Naive thymus-derived CD8-positive, alpha-beta T cell (primary cell): ENCODE measurements at regions of chr11 and their contacts with region 1.

Region 1: DNA sequence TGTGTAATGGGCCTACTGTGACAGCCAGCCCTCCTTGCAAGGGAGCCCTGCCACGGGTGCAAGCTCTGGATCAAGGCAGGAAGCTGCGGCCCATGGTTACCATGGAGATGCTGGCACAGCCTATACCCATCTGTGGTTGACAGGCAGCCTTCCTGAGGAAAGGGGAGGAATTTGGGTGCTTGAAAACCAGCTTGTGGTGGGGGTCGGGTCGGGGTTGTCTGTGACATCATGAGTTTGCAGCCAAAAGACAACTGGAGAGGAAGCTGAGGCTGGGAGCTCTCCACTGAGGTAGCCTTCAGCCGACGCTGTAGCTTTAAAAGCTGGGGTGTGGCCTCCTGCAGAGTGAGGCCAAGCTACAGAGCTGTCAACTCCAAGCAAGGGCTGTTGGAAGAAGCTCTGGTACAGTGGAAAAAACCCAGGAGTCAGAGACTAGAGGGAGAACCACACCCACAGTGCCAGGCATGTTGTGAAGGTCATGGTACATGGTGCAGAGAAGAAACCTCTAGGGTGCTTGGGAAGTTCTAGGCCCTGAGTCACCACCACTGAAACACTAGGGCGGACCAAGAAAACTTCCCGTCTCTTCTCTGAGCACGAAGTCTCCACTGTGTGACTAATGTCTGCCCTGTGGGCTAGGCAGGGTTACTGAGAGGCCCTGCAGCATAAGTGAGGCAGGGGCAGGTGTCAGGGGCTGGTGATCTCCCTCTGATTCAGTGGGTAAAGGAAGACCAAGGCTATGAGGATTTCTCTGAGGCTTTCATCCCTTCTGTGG is 10.8 kb upstream of the LDHA start:
- DNase-seq: peak in 9 of 10 donors; percentile 40 to 79 (median 63)
- ATAC-seq: peak; percentile 79 to 81
- H3K4me3 Mint-ChIP-seq: peak overlapping the region; percentile 47 to 90 (median 76)
- H3K27ac Mint-ChIP-seq: peak overlapping the region; percentile 92 to 100 (median 98)
- H3K4me1 Mint-ChIP-seq: peaks cover 24 to 38% (median 34%) of the 10 kb centered on the region in 4 donors
- H3K27me3 Mint-ChIP-seq: no peaks in the 10 kb centered on the region

Region 2: GRCh38 chr11:18329196-18329870 is 54.2 kb before region 1 on chr11:
- POLR2A ChIA-PET with region 1: no interaction called
- DNase-seq: no peak
- ATAC-seq: no peak
- H3K4me3 Mint-ChIP-seq: peak overlapping the region in 2 of 10 donors; percentile 3
- H3K27ac Mint-ChIP-seq: peak overlapping the region; percentile 31 to 88 (median 68)
- H3K4me1 Mint-ChIP-seq: peaks cover 31 to 75% (median 63%) of the 10 kb centered on the region in 4 donors
- H3K27me3 Mint-ChIP-seq: no peaks in the 10 kb centered on the region

Region 3: GRCh38 chr11:18372201-18372600 is 11.4 kb before region 1 on chr11:
- POLR2A ChIA-PET with region 1: no interaction called
- DNase-seq: no peak
- ATAC-seq: no peak
- H3K4me3 Mint-ChIP-seq: no peak overlapping the region
- H3K27ac Mint-ChIP-seq: no peak overlapping the region
- H3K4me1 Mint-ChIP-seq: peaks cover 0 to 5% (median 5%) of the 10 kb centered on the region in 4 donors
- H3K27me3 Mint-ChIP-seq: no peaks in the 10 kb centered on the region

Region 4: GRCh38 chr11:18395735-18396504 is 12.3 kb after region 1 on chr11:
- POLR2A ChIA-PET with region 1: interaction called, 87 read pairs
- DNase-seq: peak; percentile 84 to 98 (median 94)
- ATAC-seq: peak; percentile 53 to 56
- H3K4me3 Mint-ChIP-seq: peak overlapping the region; percentile 94 to 99 (median 98)
- H3K27ac Mint-ChIP-seq: peak overlapping the region; percentile 88 to 99 (median 98)
- H3K4me1 Mint-ChIP-seq: peaks cover 9 to 45% (median 35%) of the 10 kb centered on the region in 4 donors
- H3K27me3 Mint-ChIP-seq: no peaks in the 10 kb centered on the region